Activated T-helper 2 cell treated with anti-CD3 and anti-CD28 coated beads, Interferon-gamma antibody, Interleukin-2, Interleukin-4, amounts not matched to agents 10 μg/mL and 5 μg/mL and 100 μg/mL, durations not matched to agents 14 hours and 24 hours and 36 hours (primary cell): ENCODE measurements at regions of chr11 and their contacts with region 1.

Region 1: DNA sequence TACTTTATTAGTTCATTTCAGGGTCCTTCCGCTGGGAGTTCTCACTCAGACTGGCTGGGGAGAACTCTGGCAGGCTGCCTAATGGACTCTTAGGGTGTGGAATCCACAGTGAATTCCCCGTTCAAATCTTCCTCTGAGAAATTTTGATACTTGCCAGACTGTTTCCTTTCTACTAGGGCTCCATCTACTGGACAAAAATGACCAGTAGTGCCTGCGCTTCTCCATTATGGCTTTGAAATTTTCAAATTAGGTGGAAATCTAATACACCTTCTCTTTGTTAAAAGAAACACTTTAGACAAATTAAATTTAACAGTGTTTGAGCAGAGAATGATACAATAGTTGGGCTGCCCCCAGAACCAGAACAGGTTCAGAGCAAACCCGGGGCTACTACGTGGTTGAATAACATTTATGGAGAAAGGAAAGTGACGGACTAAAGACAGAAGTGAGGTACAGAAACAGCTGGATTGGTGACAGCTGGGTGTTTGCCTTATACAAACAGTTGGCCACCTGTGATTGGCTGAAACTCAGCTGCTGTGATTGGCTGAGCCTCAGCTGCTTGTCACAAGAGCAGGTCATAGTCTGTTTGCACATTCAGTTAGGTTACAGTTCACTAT is 52.9 kb upstream of the FDX1 start:
- DNase-seq: no peak
- H3K4me3 Mint-ChIP-seq: no peak overlapping the region
- H3K27ac Mint-ChIP-seq: peak overlapping the region; percentile 21
- H3K4me1 Mint-ChIP-seq: peaks cover 28% of the 10 kb centered on the region
- H3K27me3 Mint-ChIP-seq: peaks cover 2% of the 10 kb centered on the region

Region 2: GRCh38 chr11:109864834-109865547 is 511.8 kb before region 1 on chr11:
- intact Hi-C with region 1: loop called (anchors 1 kb)
- DNase-seq: no peak
- H3K4me3 Mint-ChIP-seq: no peak overlapping the region
- H3K27ac Mint-ChIP-seq: peak overlapping the region; percentile 76
- H3K4me1 Mint-ChIP-seq: peaks cover 16% of the 10 kb centered on the region
- H3K27me3 Mint-ChIP-seq: no peaks in the 10 kb centered on the region

Region 3: GRCh38 chr11:109971184-109971523 is 405.7 kb before region 1 on chr11:
- intact Hi-C with region 1: loop called (anchors 10 kb)
- DNase-seq: no peak
- H3K4me3 Mint-ChIP-seq: peak overlapping the region; percentile 11
- H3K27ac Mint-ChIP-seq: peak overlapping the region; percentile 89
- H3K4me1 Mint-ChIP-seq: peaks cover 60% of the 10 kb centered on the region
- H3K27me3 Mint-ChIP-seq: peaks cover 4% of the 10 kb centered on the region

Region 4: DNA sequence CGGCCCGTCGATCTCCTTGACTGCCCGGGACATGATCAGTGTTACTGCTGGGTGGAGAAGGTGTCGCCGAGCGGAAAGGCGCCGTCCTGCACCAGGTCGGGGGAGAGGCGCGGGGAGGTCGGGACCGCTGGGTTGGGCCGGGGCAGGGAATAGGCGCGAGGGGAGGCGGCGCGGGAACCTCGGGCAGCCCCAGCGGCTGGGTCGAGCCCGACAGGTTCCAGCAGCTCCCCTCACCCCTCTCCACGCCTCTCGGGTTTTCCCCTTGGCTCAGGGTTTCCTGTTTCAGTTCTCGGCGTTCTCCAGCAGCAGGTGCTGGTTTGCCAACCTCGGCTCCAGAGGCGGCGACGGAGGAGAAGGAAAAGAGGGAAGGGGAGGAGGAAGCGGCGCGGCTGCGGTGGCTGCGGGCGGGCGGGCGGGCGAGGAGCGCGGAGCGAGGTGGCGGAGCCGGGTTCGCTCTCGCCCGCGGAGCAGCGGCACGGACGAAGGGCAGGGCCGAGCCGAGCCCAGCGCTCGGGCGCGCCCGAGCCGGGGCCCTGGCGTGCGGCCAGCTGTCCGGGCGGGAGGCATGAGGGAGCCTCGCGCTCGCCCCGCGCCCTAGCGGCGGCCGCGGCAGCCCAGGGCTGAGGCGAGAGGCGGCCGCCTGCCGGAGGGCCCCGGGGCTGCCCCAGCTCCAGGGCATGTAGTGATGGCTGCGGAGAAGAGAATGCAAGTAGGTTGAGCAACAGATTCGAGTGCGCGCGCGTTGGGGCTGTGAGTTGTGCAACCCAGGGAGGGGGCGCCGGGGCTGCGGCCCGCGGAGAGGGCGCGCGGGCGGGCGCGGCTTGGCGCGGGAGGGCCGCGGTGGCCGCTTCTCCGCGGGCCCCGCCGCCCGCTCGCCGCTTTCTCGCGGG is 284.1 kb before region 1 on chr11 and contains the start of gene ZC3H12C:
- intact Hi-C with region 1: loop called (anchors 5 kb)
- DNase-seq: peak; percentile 38
- H3K4me3 Mint-ChIP-seq: peak within 1 kb of the TSS; percentile 89
- H3K27ac Mint-ChIP-seq: peak within 1 kb of the TSS; percentile 95
- H3K4me1 Mint-ChIP-seq: peaks cover 36% of the 10 kb centered on the region
- H3K27me3 Mint-ChIP-seq: peaks cover 32% of the 10 kb centered on the region
- total RNA-seq, gene ZC3H12C: 16.7 and 17.5 TPM in 2 replicates

Region 5: GRCh38 chr11:110296226-110297075 is 80.4 kb before region 1 on chr11 and contains the start of gene RDX:
- intact Hi-C with region 1: loop called (anchors 1 kb)
- DNase-seq: peak; percentile 56
- H3K4me3 Mint-ChIP-seq: peak within 1 kb of the TSS; percentile 95
- H3K27ac Mint-ChIP-seq: peak within 1 kb of the TSS; percentile 63
- H3K4me1 Mint-ChIP-seq: peaks cover 43% of the 10 kb centered on the region
- H3K27me3 Mint-ChIP-seq: no peaks in the 10 kb centered on the region
- total RNA-seq, gene RDX: 63.3 and 64.8 TPM in 2 replicates

Region 6: GRCh38 chr11:110349138-110349996 is 27.5 kb before region 1 on chr11:
- intact Hi-C with region 1: loop called (anchors 1 kb)
- DNase-seq: peak; percentile 58
- H3K4me3 Mint-ChIP-seq: peak overlapping the region; percentile 61
- H3K27ac Mint-ChIP-seq: peak overlapping the region; percentile 96
- H3K4me1 Mint-ChIP-seq: peaks cover 66% of the 10 kb centered on the region
- H3K27me3 Mint-ChIP-seq: no peaks in the 10 kb centered on the region